Mucosa of descending colon (tissue), 3 donors: ENCODE measurements at regions of chr19 and their contacts with region 1.

Region 1: DNA sequence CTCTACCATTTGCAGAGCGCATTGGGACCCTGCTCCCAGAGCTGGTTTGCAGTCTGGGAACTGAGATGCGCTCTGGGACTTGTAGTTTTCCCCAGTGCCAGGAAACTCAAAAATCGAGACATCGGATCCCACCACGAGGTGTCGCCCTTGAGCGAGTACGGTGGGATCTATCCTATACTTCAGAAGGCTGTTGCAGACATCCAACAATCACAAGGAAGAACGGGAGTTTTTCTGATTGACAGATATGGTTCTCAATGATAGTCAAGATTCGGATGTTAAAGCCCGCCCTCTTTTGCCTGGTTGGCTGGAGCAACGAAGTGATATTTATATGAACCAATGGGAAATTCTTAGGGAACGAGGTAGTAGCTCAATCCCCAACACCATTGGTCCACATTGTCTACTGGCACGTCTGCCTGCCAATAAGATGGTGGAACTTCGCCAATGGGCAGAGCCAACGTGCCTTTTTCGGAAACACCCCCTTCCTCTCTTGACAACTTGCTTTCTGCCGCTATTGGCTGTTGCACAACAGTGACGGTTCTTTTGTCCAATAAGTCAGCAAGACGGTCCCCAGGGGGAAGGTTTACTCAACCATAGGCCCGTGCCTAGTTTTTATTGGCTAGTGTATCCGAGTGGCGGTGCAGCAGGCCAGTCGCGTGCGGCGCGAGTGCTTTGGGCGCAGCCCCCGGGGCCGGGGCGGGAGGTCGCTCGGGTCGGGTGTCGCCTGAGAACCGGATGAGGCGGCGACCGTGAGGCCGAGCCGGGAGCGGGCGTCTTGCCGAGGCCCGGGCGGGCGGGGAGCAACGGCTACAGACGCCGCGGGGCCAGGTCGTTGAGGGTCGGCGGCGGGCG is at the start of gene DNM2:
- DNase-seq: peak; percentile 99 to 100 (median 99)
- ATAC-seq: peak; percentile 80
- H3K4me3 ChIP-seq: peak within 1 kb of the TSS; percentile 90
- H3K4me1 ChIP-seq: peaks cover 39% of the 10 kb centered on the region
- CTCF ChIP-seq: peak; percentile 65
- total RNA-seq, gene DNM2: 318 to 602 (median 562) TPM

Region 2: GRCh38 chr19:10653715-10654492 is 63.7 kb before region 1 on chr19 and contains the start of gene ILF3:
- intact Hi-C with region 1: no loop called
- DNase-seq: peak; percentile 99 to 100 (median 100)
- ATAC-seq: peak; percentile 93
- H3K4me3 ChIP-seq: peak within 1 kb of the TSS; percentile 93
- H3K4me1 ChIP-seq: peaks cover 29% of the 10 kb centered on the region
- CTCF ChIP-seq: no peak
- total RNA-seq, gene ILF3: 151 to 213 (median 178) TPM

Region 3: DNA sequence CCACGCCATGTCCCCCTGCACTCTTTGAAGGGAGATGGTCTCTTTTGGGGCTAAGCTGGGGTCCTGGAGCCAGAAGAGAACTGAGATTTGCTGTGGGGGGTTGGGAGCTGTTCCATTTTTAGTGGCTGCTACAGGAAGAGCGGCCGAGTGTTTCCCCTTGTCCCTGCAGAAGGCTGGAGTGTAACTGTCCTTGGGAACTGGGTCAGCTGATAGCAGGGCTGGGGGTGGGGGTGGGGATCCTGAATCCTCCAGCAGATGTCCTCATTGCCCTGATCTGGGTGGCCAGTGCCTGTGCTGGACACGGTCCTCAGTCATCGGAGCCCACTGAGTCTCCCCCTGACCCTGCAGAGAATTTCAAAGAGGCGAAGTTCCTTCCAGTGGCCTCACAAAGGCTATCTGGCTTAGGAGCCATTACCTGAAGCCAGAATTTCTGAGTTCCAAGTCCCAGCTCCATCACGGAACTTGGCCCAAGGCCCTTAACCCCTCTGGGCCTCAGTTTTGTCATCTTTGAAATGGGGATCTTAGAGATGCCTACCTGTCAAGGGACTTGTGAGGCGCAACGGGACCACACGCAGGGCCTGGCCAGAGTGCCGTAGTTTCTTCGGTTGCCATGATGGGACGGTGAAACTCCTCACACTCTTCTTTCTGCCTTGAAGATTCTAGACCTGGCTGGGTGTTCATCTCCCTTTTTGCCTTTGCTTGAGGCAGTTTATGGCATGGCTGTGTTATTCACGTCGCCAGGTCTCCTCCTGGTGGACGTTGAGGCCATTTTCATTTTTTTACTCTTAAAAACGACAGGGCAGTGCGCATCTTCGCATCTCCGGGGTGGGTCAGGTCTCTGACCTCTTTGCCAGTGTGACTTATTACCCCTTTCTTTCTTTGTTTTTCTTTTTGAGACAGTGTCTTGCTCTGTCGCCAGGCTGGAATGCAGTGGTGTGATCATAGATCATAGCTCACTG is 52.2 kb after region 1 on chr19:
- intact Hi-C with region 1: loop called in 1 of 2 experiments (anchors 5 kb)
- DNase-seq: no peak
- ATAC-seq: peak; percentile 48
- H3K4me3 ChIP-seq: no peak overlapping the region
- H3K4me1 ChIP-seq: peaks cover 31% of the 10 kb centered on the region
- CTCF ChIP-seq: no peak

Region 4: DNA sequence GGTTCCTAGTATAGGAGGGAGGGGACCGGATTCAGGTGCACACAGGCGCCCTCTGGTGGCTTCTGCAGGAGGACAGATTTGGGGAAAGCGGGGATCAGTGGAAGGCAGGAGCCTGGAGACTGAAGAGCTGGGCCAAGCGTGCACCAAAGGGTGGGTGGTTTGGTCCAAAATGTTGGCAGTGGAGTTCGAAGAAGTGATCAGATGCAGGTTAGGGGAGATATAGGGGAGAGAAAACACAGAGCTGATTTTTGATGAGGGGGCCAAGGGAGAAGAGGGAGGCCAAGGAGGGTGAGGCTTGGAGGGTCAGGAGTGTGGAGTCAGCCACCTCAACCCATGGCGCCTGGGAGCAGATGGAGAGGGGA is 146.9 kb after region 1 on chr19:
- intact Hi-C with region 1: loop called in 1 of 2 experiments (anchors 10 kb)
- DNase-seq: peak; percentile 86 to 91 (median 90)
- ATAC-seq: peak; percentile 91
- H3K4me3 ChIP-seq: no peak overlapping the region
- H3K4me1 ChIP-seq: no peaks in the 10 kb centered on the region
- CTCF ChIP-seq: peak; percentile 77